Activated CD4-positive, alpha-beta memory T cell treated with anti-CD3 and anti-CD28 coated beads for 36 hours (primary cell): ENCODE measurements at regions of chr11 and their contacts with region 1.

Region 1: GRCh38 chr11:111766093-111766833 is at the start of gene PPP2R1B:
- DNase-seq: peak; percentile 81
- H3K4me3 Mint-ChIP-seq: peak within 1 kb of the TSS; percentile 100
- H3K27ac Mint-ChIP-seq: peak within 1 kb of the TSS; percentile 89
- H3K4me1 Mint-ChIP-seq: peaks cover 34% of the 10 kb centered on the region
- H3K27me3 Mint-ChIP-seq: no peaks in the 10 kb centered on the region
- total RNA-seq, gene PPP2R1B: 49.4 to 51.1 TPM

Region 2: DNA sequence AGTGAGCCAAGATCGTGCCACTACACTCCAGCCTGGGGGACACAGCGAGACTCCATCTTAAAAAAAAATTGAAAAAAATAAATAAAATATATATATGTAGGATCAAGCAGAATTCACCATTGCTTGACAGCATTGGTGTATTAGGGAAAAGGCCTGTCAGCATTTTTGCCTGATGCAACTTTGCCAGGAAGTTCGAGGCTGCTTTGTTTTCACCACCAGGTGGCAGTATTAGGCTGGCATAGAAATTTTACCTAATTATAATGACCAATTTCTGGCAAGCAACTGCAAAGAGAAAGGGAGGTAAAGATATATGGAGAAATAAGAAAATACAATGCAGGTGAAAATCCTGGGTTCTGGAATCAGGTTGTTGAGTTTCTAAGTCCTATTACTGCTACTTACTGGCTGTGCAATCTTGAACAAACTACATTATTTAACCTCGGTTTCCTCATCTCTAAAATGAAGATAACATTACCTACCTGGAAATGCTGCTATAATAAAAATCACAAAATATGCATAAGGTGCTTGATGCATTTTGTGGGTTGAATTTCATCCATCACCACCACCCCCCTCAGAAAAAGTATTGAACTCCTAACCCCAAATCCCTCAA is 201.0 kb before region 1 on chr11:
- CTCF ChIA-PET with region 1: no interaction called
- POLR2A ChIA-PET with region 1: no interaction called
- intact Hi-C with region 1: loop called (anchors 1 kb)
- DNase-seq: peak; percentile 70
- H3K4me3 Mint-ChIP-seq: no peak overlapping the region
- H3K27ac Mint-ChIP-seq: no peak overlapping the region
- H3K4me1 Mint-ChIP-seq: no peaks in the 10 kb centered on the region
- H3K27me3 Mint-ChIP-seq: no peaks in the 10 kb centered on the region

Region 3: GRCh38 chr11:111652184-111652583 is 114.1 kb before region 1 on chr11:
- CTCF ChIA-PET with region 1: no interaction called
- POLR2A ChIA-PET with region 1: no interaction called
- intact Hi-C with region 1: no loop called
- DNase-seq: no peak
- H3K4me3 Mint-ChIP-seq: no peak overlapping the region
- H3K27ac Mint-ChIP-seq: no peak overlapping the region
- H3K4me1 Mint-ChIP-seq: peaks cover 4% of the 10 kb centered on the region
- H3K27me3 Mint-ChIP-seq: no peaks in the 10 kb centered on the region

Region 4: GRCh38 chr11:111694851-111695250 is 71.4 kb before region 1 on chr11:
- CTCF ChIA-PET with region 1: no interaction called
- POLR2A ChIA-PET with region 1: no interaction called
- intact Hi-C with region 1: loop called (anchors 5 kb)
- DNase-seq: no peak
- H3K4me3 Mint-ChIP-seq: no peak overlapping the region
- H3K27ac Mint-ChIP-seq: no peak overlapping the region
- H3K4me1 Mint-ChIP-seq: peaks cover 12% of the 10 kb centered on the region
- H3K27me3 Mint-ChIP-seq: no peaks in the 10 kb centered on the region

Region 5: DNA sequence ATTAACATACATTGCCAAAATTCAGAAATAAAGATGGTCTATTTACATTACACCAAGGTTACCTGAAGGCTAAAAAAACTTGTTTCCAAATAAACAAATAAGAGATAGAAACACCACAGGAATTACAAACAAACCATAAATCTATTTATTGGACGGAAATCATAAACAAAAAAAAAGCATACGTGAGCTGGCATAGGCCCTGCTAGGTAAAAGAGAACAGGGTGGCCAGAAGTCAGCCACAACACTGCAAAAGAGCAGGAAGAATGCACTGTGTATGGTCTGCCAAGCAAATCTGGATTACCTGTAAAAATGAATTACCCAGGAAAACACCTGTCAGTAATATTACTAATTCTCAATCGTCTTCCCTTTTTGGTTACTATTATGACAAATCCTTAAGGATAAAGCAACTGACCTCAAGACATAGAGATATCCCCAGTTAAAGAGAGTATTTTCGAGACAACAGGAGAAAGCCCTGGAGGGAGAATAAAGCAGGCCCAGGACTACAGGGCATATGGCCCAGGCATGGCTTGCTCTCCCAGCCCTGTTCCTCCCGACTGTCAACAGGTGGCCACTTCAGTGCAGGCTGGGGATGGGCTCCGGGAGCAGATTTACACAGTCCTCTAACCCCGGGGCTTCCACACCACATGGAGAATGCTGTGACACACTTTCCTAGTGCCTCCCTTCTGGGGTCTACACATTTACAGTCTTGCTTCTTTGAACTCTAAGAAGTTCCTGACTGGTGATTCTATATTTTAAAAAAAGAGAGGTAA is 18.0 kb before region 1 on chr11:
- CTCF ChIA-PET with region 1: no interaction called
- POLR2A ChIA-PET with region 1: no interaction called
- intact Hi-C with region 1: no loop called
- DNase-seq: no peak
- H3K4me3 Mint-ChIP-seq: no peak overlapping the region
- H3K27ac Mint-ChIP-seq: no peak overlapping the region
- H3K4me1 Mint-ChIP-seq: no peaks in the 10 kb centered on the region
- H3K27me3 Mint-ChIP-seq: no peaks in the 10 kb centered on the region

Region 6: DNA sequence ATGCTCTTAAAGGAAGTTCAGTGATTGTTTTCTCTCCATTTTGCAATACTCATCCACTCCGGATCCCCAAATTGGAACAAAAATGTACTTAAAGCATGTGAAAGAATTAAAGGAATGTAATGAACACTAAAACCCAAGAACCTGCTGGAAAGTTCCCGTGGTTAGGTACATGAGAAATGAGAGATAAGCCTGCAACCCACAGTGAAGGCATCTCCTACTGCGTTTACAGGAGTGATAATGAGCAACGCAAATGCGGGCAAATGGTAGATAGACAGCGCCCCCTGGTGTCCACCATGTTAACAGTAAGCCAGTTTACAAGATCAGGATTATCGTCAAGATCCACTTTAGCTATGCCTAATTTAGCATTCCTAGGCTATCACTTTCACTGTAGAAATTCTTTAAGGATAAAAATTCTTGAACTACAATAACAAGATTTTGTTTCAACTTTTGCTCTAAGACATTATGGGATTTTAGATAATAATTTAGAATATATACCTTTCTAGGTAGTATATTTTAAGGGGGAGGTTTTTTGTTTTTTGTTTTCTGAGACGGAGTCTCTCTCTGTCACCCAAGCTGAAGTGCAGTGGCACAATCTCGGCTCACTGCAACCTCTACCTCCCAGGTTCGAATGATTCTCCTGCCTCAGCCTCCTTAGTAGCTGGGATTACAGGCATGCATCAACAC is 75.2 kb after region 1 on chr11:
- CTCF ChIA-PET with region 1: interaction called, 19 read pairs
- POLR2A ChIA-PET with region 1: no interaction called
- intact Hi-C with region 1: loop called (anchors 1 kb)
- DNase-seq: peak; percentile 91
- H3K4me3 Mint-ChIP-seq: no peak overlapping the region
- H3K27ac Mint-ChIP-seq: no peak overlapping the region
- H3K4me1 Mint-ChIP-seq: peaks cover 11% of the 10 kb centered on the region
- H3K27me3 Mint-ChIP-seq: no peaks in the 10 kb centered on the region

Region 7: GRCh38 chr11:111926505-111927391 is 160.5 kb after region 1 on chr11:
- CTCF ChIA-PET with region 1: no interaction called
- POLR2A ChIA-PET with region 1: no interaction called
- intact Hi-C with region 1: loop called (anchors 2 kb)
- DNase-seq: peak; percentile 98
- H3K4me3 Mint-ChIP-seq: peak overlapping the region; percentile 84
- H3K27ac Mint-ChIP-seq: peak overlapping the region; percentile 86
- H3K4me1 Mint-ChIP-seq: peaks cover 13% of the 10 kb centered on the region
- H3K27me3 Mint-ChIP-seq: no peaks in the 10 kb centered on the region